ENCODE measurements at regions of chr12 and their contacts with region 1.

Region 1: DNA sequence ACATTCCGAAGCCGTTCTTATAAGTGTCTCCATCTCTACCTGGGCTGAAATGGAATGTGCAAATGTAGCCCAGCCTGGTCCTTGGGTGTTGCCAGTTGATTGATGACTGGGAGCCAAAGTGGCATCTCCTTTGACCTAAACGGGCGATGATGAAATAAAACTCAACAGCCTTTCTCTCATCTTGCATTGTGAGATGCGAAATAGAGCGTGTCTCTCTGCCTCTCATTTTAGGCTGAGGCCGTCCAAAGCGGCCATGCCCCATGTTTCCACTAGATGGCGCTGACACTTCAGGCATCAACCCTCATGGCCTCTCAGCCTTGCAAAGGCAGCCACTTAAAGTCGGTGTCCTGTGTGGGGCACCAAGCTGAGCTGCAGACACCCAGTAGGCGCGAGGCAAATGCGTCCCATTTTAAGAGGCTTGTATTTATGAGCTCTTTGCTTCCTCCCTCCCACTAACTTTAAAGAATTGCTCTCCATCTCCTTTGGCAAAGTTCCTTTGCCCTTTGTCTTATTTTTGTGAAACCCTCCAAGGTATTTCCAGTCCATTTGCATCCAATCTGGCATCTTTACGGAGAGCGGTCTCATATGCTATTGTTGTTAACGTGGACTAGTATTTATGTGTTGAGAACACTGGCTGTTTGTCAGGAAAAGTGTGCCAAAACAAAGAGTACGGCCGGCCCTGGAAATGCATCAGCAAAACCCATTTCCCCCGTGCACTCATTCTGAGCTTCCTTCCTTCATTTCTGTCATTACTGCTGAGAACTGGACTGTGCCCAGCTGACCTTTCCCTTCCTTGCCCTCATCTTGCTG is 25.0 kb downstream of the GPRC5A start:
- DNase-seq: peak; percentile 79
- H3K4me3 ChIP-seq: no peak overlapping the region
- H3K27ac ChIP-seq: no peak overlapping the region
- H3K4me1 ChIP-seq: no peaks in the 10 kb centered on the region
- CTCF ChIP-seq: peak; percentile 96

Region 2: GRCh38 chr12:12786716-12787601 is 129.4 kb before region 1 on chr12:
- CTCF ChIA-PET with region 1: no interaction called
- POLR2A ChIA-PET with region 1: interaction called, 3 read pairs
- intact Hi-C with region 1: loop called (anchors 2 kb)
- DNase-seq: no peak
- H3K4me3 ChIP-seq: no peak overlapping the region
- H3K27ac ChIP-seq: no peak overlapping the region
- H3K4me1 ChIP-seq: peaks cover 7% of the 10 kb centered on the region
- CTCF ChIP-seq: no peak

Region 3: DNA sequence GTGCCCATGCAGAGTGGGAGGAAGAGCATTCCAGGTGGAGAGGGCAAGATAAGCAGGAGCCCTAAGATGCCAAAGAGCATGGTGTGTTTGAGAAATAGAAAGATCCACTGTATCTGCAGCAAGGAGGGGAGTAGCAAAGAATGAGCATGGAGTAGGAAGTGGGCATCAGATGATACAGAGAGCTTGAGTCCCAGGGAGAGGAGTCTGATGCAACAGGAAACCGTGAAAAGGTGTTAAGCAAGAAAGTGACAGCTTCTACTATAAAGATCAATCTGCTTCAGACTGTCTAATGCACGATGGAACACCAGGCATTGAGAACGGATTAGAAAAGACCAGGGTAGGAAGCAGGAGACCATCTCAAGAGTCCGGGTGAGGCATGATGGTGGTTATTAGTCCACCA is 47.9 kb after region 1 on chr12:
- CTCF ChIA-PET with region 1: no interaction called
- POLR2A ChIA-PET with region 1: no interaction called
- intact Hi-C with region 1: no loop called
- DNase-seq: no peak
- H3K4me3 ChIP-seq: no peak overlapping the region
- H3K27ac ChIP-seq: no peak overlapping the region
- H3K4me1 ChIP-seq: no peaks in the 10 kb centered on the region
- CTCF ChIP-seq: no peak

Region 4: DNA sequence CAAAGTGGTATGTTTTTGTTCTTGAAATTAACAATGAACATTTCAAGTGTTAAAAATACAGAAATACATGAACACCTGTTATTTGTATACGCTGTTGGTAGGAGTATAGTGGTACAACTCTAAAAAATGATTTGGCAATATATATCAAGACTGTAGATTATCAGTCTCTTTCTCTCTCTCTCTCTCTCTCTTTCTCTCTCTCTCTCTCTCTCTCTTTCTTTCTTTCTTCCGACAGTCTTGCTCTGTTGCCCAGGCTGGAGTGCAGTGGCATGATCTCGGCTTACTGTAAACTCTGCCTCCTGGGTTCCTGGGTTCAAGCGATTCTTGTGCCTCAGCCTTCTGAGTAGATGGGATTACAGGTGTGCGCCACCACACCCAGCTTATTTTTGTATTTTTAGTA is 71.1 kb after region 1 on chr12:
- CTCF ChIA-PET with region 1: no interaction called
- POLR2A ChIA-PET with region 1: no interaction called
- intact Hi-C with region 1: no loop called
- DNase-seq: no peak
- H3K4me3 ChIP-seq: no peak overlapping the region
- H3K27ac ChIP-seq: no peak overlapping the region
- H3K4me1 ChIP-seq: no peaks in the 10 kb centered on the region
- CTCF ChIP-seq: no peak

Region 5: GRCh38 chr12:12999959-13000615 is 83.7 kb after region 1 on chr12 and contains the start of gene HEBP1:
- CTCF ChIA-PET with region 1: no interaction called
- POLR2A ChIA-PET with region 1: no interaction called
- intact Hi-C with region 1: loop called (anchors 2 kb)
- DNase-seq: peak; percentile 85
- H3K4me3 ChIP-seq: peak within 1 kb of the TSS; percentile 62
- H3K27ac ChIP-seq: no peak within 1 kb of the TSS
- H3K4me1 ChIP-seq: peaks cover 9% of the 10 kb centered on the region
- CTCF ChIP-seq: no peak
- total RNA-seq, gene HEBP1: 0.16 and 0.26 TPM in 2 replicates

Region 6: DNA sequence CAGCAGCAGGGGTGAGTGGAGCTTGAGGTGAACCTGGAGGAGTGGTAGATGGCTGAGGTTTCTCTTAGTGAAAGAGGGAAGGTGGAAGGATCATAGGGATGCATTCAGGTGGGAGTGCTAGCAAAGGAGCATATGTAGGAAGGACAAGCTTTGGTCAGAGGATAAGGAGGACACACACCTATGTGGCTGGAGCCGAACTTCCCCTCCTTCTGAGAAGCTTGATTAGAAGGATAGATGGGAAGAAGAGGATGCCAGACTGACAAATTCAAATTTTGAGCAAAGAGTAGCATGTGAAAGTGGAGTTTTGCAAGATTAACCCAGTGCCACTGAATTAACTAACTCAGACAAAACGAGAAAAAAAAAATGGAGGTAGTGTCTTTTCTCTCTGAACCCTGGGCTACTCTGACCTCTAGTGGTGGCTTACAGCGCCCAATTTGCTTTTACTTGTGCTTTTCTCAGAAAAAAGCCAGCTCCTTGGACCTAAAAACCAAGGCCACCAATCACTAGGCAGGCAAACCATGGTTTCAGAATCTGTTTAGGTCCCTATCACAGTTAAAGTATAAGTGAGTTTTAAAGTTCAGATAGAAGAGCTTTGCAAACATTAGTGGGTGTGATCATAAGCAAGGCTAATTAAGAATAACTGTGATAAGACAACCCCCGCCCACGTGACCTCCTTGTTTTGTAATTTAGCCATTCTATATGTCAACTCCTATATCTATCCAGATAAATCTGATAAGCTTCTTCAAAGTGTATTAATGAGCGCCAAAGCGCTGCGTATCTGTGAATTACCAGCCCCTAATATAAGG is 295.7 kb after region 1 on chr12:
- CTCF ChIA-PET with region 1: interaction called, 5 read pairs
- POLR2A ChIA-PET with region 1: interaction called, 3 read pairs
- intact Hi-C with region 1: loop called (anchors 1 kb)
- DNase-seq: peak; percentile 70
- H3K4me3 ChIP-seq: peak overlapping the region; percentile 8
- H3K27ac ChIP-seq: no peak overlapping the region
- H3K4me1 ChIP-seq: no peaks in the 10 kb centered on the region
- CTCF ChIP-seq: peak; percentile 92